ENCODE measurements at regions of chr4 and their contacts with region 1.

Region 1: GRCh38 chr4:1351854-1352633 is 5.0 kb downstream of the UVSSA start:
- DNase-seq: peak; percentile 87 to 94
- ATAC-seq: peak; percentile 35 to 44 (median 37)
- H3K4me3 ChIP-seq: no peak overlapping the region
- H3K4me3 Mint-ChIP-seq: no peak overlapping the region
- H3K27ac ChIP-seq: peak overlapping the region; percentile 4
- H3K27ac Mint-ChIP-seq: peak overlapping the region; percentile 31 to 76
- H3K4me1 ChIP-seq: peaks cover 22% of the 10 kb centered on the region
- H3K4me1 Mint-ChIP-seq: peaks cover 27 to 29% of the 10 kb centered on the region in 2 donors
- H3K27me3 ChIP-seq: no peaks in the 10 kb centered on the region
- H3K27me3 Mint-ChIP-seq: no peaks in the 10 kb centered on the region
- CTCF ChIP-seq: peak; percentile 90

Region 2: GRCh38 chr4:742742-743311 is 609.2 kb before region 1 on chr4:
- intact Hi-C with region 1: loop called (anchors 5 kb)
- DNase-seq: peak; percentile 55 to 85
- ATAC-seq: peak; percentile 77 to 89 (median 86)
- H3K4me3 ChIP-seq: no peak overlapping the region
- H3K4me3 Mint-ChIP-seq: no peak overlapping the region
- H3K27ac ChIP-seq: no peak overlapping the region
- H3K27ac Mint-ChIP-seq: peak overlapping the region; percentile 43 to 47
- H3K4me1 ChIP-seq: no peaks in the 10 kb centered on the region
- H3K4me1 Mint-ChIP-seq: peaks cover 7 to 15% of the 10 kb centered on the region in 2 donors
- H3K27me3 ChIP-seq: no peaks in the 10 kb centered on the region
- H3K27me3 Mint-ChIP-seq: no peaks in the 10 kb centered on the region
- CTCF ChIP-seq: peak; percentile 74

Region 3: DNA sequence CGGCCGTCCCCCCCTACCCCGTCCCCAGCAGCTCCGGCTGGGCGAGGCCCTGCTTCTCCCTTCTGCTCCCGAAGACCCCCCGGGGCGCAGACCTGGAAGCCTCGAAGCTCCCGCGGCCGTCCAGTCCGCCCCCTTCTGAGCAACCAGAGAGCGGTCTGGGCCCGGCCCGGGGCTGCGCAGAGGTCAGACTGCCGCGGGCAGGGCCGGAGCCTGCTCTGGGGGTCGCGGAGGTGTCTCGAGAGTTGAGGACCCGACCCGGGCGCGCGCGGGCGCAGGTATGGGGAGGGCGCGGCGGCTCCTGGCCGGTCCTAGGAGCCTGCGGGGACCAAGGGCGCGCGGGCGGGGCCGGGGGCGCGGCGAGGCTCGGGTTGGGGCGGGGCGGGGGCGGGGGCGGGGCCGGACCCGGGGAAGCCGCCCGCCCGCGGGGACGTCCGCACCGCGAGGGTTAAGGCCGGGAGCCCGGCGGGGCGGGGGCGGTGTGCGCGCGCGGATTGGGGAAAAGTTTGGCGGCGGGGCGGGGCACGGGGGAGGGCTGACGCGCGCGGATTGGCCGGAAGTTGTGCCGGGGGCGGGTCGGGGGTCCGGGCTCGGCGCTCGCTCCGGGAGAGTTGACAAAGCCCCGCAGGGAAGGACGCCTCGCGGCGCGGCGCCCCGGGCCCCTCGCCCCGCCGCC is 340.9 kb before region 1 on chr4 and contains the start of gene FGFRL1:
- intact Hi-C with region 1: loop called (anchors 10 kb)
- DNase-seq: peak; percentile 76 to 94
- ATAC-seq: peak; percentile 45 to 65 (median 60)
- H3K4me3 ChIP-seq: peak within 1 kb of the TSS; percentile 70
- H3K4me3 Mint-ChIP-seq: peak within 1 kb of the TSS; percentile 92
- H3K27ac ChIP-seq: peak within 1 kb of the TSS; percentile 78
- H3K27ac Mint-ChIP-seq: peak within 1 kb of the TSS; percentile 84 to 96
- H3K4me1 ChIP-seq: peaks cover 30% of the 10 kb centered on the region
- H3K4me1 Mint-ChIP-seq: peaks cover 7 to 15% of the 10 kb centered on the region in 2 donors
- H3K27me3 ChIP-seq: no peaks in the 10 kb centered on the region
- H3K27me3 Mint-ChIP-seq: peaks cover 16 to 24% of the 10 kb centered on the region in 2 donors
- CTCF ChIP-seq: no peak
- total RNA-seq, gene FGFRL1: 28.0 to 39.8 (median 32.5) TPM

Region 4: GRCh38 chr4:1365271-1366178 is 13.5 kb after region 1 on chr4:
- intact Hi-C with region 1: no loop called
- DNase-seq: no peak
- ATAC-seq: no peak
- H3K4me3 ChIP-seq: no peak overlapping the region
- H3K4me3 Mint-ChIP-seq: no peak overlapping the region
- H3K27ac ChIP-seq: no peak overlapping the region
- H3K27ac Mint-ChIP-seq: no peak overlapping the region
- H3K4me1 ChIP-seq: no peaks in the 10 kb centered on the region
- H3K4me1 Mint-ChIP-seq: no peaks in the 10 kb centered on the region
- H3K27me3 ChIP-seq: no peaks in the 10 kb centered on the region
- H3K27me3 Mint-ChIP-seq: no peaks in the 10 kb centered on the region
- CTCF ChIP-seq: no peak

Region 5: GRCh38 chr4:1628892-1629698 is 277.1 kb after region 1 on chr4:
- intact Hi-C with region 1: loop called (anchors 1 kb)
- DNase-seq: peak; percentile 70 to 76
- ATAC-seq: peak; percentile 77 to 93 (median 93)
- H3K4me3 ChIP-seq: no peak overlapping the region
- H3K4me3 Mint-ChIP-seq: no peak overlapping the region
- H3K27ac ChIP-seq: no peak overlapping the region
- H3K27ac Mint-ChIP-seq: no peak overlapping the region
- H3K4me1 ChIP-seq: peaks cover 5% of the 10 kb centered on the region
- H3K4me1 Mint-ChIP-seq: no peaks in the 10 kb centered on the region
- H3K27me3 ChIP-seq: no peaks in the 10 kb centered on the region
- H3K27me3 Mint-ChIP-seq: no peaks in the 10 kb centered on the region
- CTCF ChIP-seq: peak; percentile 97

Measured in natural killer cell (primary cell).